Esophagus muscularis mucosa (tissue), 4 donors: ENCODE measurements at regions of chr11 and their contacts with region 1.

Region 1: GRCh38 chr11:73177778-73178577 is 35.9 kb upstream of the FCHSD2 start:
- DNase-seq: peak; percentile 95
- H3K4me3 ChIP-seq: peak overlapping the region in 1 of 4 donors; percentile 23
- H3K27ac ChIP-seq: peak overlapping the region; percentile 51 to 75 (median 65)
- H3K4me1 ChIP-seq: peaks cover 25 to 51% (median 31%) of the 10 kb centered on the region in 4 donors
- H3K27me3 ChIP-seq: no peaks in the 10 kb centered on the region
- CTCF ChIP-seq: peak; percentile 76 to 89 (median 82)
- EP300 ChIP-seq: no peak
- POLR2A ChIP-seq: no peak

Region 2: DNA sequence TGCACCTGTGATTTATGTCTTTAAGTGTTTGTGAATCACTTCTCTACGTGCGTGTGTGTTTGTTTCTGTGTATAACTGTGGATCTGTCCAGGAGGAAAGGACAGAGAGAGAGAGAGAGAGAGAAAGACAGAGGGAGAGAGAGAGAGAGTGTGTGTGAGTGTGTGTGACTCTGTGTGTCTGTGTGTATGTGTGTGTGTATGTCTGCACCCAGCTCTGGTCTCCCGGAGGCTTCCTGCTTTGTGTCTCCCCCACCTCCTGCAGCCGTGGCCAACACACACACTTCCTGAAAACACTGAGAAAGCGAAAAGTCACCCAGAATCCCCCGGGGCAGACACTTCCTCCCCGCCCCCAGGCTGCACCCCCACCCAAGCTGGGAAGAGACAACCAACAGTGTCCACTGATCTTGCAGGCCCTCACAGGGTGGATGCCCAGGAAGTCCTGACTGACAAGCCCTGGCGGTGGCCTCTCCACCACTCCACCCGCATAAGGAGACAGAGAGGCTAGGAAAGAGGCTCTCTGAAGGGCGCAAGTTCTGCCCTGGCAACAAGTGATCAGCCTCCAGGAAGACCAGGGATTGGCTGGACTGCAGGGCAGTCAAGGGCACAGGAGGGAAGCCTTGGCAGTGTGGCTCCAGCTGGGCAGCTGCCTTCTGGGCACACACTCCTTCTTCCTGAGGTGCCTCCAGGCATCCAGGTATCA is 455.8 kb before region 1 on chr11:
- intact Hi-C with region 1: loop called (anchors 10 kb)
- DNase-seq: peak; percentile 98
- H3K4me3 ChIP-seq: peak overlapping the region; percentile 66 to 73 (median 71)
- H3K27ac ChIP-seq: peak overlapping the region; percentile 74 to 89 (median 84)
- H3K4me1 ChIP-seq: peaks cover 52 to 85% (median 70%) of the 10 kb centered on the region in 4 donors
- H3K27me3 ChIP-seq: no peaks in the 10 kb centered on the region
- CTCF ChIP-seq: no peak
- EP300 ChIP-seq: no peak
- POLR2A ChIP-seq: no peak

Region 3: DNA sequence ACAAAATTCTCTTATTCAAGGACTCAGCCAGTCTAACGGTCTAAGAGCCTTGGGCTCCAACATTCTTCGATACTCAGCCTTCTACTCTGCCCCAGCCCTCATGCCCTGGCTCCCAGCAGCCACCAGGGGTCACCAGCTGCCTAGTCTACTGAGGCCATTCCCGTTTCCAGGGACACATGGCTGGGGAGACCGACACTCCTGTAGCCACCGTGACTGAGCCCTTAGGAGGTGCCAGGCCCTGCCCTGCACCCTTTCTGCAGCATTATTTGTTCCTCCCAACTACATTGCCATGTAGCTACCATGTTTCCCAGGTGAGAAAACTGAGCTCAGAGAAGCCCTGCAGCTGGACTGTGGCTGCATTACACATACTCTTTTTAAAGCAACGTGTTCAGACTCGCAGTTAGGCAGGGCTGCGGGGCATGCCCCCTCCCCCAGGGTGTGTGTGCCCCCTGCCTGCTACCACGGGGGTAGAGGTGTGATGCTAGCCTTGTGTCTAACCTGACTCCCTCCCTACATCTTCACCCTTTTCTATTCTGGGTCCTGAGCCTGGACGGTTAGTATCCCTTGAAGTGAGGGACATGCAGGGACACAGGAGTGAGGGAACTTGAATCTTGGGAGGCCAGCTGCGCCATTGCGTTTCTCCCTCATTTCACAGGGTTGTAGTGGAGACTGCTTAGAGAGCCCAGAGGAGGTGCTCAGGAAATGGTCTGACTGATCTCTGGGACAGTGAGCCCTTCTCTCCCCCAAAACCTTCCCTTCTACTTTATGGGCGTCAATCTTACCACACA is 346.3 kb before region 1 on chr11:
- intact Hi-C with region 1: loop called (anchors 1 kb)
- DNase-seq: no peak
- H3K4me3 ChIP-seq: no peak overlapping the region
- H3K27ac ChIP-seq: peak overlapping the region; percentile 59 to 76 (median 72)
- H3K4me1 ChIP-seq: peaks cover 52 to 68% (median 59%) of the 10 kb centered on the region in 4 donors
- H3K27me3 ChIP-seq: no peaks in the 10 kb centered on the region
- CTCF ChIP-seq: peak; percentile 90 to 98 (median 94)
- EP300 ChIP-seq: no peak
- POLR2A ChIP-seq: no peak

Region 4: GRCh38 chr11:72924568-72925190 is 253.3 kb before region 1 on chr11:
- intact Hi-C with region 1: loop called (anchors 5 kb)
- DNase-seq: no peak
- H3K4me3 ChIP-seq: no peak overlapping the region
- H3K27ac ChIP-seq: no peak overlapping the region
- H3K4me1 ChIP-seq: peaks cover 0 to 16% (median 10%) of the 10 kb centered on the region in 4 donors
- H3K27me3 ChIP-seq: no peaks in the 10 kb centered on the region
- CTCF ChIP-seq: peak; percentile 54 to 57 (median 55)
- EP300 ChIP-seq: no peak
- POLR2A ChIP-seq: no peak

Region 5: GRCh38 chr11:73141848-73142286 is 36.1 kb before region 1 on chr11:
- intact Hi-C with region 1: loop called (anchors 2 kb)
- DNase-seq: peak; percentile 93
- H3K4me3 ChIP-seq: peak overlapping the region; percentile 85 to 94 (median 92)
- H3K27ac ChIP-seq: peak overlapping the region; percentile 96 to 98 (median 97)
- H3K4me1 ChIP-seq: peaks cover 18 to 54% (median 45%) of the 10 kb centered on the region in 4 donors
- H3K27me3 ChIP-seq: no peaks in the 10 kb centered on the region
- CTCF ChIP-seq: no peak
- EP300 ChIP-seq: no peak
- POLR2A ChIP-seq: no peak